CD4-positive, alpha-beta T cell (primary cell): ENCODE measurements at regions of chr4 and their contacts with region 1.

Region 1: DNA sequence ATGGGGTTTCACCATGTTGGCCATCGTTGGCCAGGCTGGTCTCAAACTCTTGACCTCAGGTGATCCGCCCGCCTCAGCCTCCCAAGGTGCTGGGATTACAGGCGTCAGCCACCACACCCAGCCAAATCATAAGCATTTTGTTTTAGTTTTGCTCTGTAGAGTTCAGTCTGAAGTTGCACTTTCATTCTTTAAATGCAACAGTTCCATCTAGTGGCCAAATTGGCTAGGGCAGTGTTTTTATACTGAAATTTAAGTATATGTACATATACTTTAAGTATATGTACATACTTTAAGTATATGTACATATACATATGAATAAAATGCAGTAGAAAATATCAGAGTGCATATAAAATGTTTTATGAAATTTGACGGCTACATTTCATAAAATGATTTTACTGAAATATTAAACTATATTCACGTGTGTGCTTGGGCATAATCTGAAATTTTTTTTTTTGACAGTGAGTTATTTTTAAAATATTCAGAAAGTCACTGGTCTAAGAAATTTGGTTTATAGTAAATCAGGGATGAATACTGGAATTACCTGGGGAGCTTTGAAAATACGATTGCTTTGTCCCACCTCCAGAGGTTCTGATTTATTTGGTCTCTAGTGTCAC is 145.5 kb downstream of the NWD2 start:
- DNase-seq: peak in 4 of 14 experiments; percentile 5 to 51 (median 46)
- ATAC-seq: no peak
- H3K4me3 ChIP-seq: no peak overlapping the region
- H3K4me3 Mint-ChIP-seq: no peak overlapping the region
- H3K27ac ChIP-seq: no peak overlapping the region
- H3K27ac Mint-ChIP-seq: no peak overlapping the region
- H3K4me1 ChIP-seq: no peaks in the 10 kb centered on the region
- H3K4me1 Mint-ChIP-seq: no peaks in the 10 kb centered on the region
- H3K27me3 ChIP-seq: no peaks in the 10 kb centered on the region
- H3K27me3 Mint-ChIP-seq: peaks cover 19% of the 10 kb centered on the region
- CTCF ChIP-seq: peak; percentile 67

Region 2: DNA sequence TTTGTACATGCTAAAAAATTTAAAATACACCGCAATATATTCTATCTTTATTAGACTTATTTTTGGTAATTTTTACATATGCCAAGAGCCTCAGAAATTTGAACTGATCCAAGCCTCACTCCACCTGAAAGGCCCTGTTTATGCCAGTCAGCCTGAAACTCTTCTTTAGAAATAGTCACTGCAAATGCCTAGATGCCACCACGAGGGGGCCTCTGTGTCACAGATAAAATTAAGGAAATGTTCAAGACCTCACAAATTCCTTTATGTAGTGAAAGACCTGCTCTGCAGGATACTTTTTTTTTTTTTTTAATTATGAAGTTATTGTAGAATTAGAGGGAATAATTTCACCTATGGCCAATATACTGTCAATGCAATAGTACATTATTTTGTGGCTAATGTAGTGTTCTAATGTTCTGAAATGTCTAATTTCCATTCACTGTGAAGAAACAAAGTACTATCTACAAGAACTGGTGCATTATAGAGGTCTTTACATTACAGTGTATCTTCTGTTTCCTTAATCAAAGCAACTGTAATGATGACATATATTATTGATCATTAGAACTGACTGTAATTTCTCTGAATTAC is 1038.9 kb before region 1 on chr4:
- CTCF ChIA-PET with region 1: no interaction called
- POLR2A ChIA-PET with region 1: no interaction called
- intact Hi-C with region 1: loop called (anchors 5 kb)
- DNase-seq: peak; percentile 61 to 86 (median 72)
- ATAC-seq: peak; percentile 94
- H3K4me3 ChIP-seq: no peak overlapping the region
- H3K4me3 Mint-ChIP-seq: no peak overlapping the region
- H3K27ac ChIP-seq: no peak overlapping the region
- H3K27ac Mint-ChIP-seq: no peak overlapping the region
- H3K4me1 ChIP-seq: no peaks in the 10 kb centered on the region
- H3K4me1 Mint-ChIP-seq: no peaks in the 10 kb centered on the region
- H3K27me3 ChIP-seq: no peaks in the 10 kb centered on the region
- H3K27me3 Mint-ChIP-seq: no peaks in the 10 kb centered on the region
- CTCF ChIP-seq: peak; percentile 91

Region 3: GRCh38 chr4:36414248-36414647 is 975.8 kb before region 1 on chr4:
- CTCF ChIA-PET with region 1: no interaction called
- POLR2A ChIA-PET with region 1: no interaction called
- intact Hi-C with region 1: loop called in 1 of 2 experiments (anchors 5 kb)
- DNase-seq: no peak
- ATAC-seq: no peak
- H3K4me3 ChIP-seq: no peak overlapping the region
- H3K4me3 Mint-ChIP-seq: no peak overlapping the region
- H3K27ac ChIP-seq: no peak overlapping the region
- H3K27ac Mint-ChIP-seq: no peak overlapping the region
- H3K4me1 ChIP-seq: no peaks in the 10 kb centered on the region
- H3K4me1 Mint-ChIP-seq: no peaks in the 10 kb centered on the region
- H3K27me3 ChIP-seq: peaks cover 0 to 33% of the 10 kb centered on the region in 2 experiments
- H3K27me3 Mint-ChIP-seq: peaks cover 52% of the 10 kb centered on the region
- CTCF ChIP-seq: no peak